Activated CD8-positive, alpha-beta T cell treated with anti-CD3 and anti-CD28 coated beads for 36 hours (primary cell): ENCODE measurements at regions of chr5 and their contacts with region 1.

Region 1: DNA sequence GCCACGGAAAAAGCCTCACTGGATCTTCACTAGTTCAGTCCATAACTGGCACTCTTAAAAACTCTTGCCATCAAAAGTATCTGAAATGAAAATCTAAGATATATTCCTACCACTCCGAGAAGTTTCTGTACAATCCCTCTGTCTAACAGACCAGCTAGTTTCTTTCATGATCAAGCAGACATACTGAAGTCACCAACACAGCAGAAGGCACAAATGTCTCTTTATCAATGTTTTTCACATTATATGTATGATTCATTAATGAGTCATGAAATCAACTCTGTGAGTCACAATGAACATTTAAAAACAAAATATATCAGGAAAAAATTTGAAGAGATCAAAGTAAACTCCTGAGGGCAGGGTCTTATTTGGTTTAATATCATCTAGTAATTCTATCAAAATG is 50.8 kb downstream of the F2R start:
- DNase-seq: no peak
- ATAC-seq: no peak
- H3K4me3 Mint-ChIP-seq: no peak overlapping the region
- H3K27ac Mint-ChIP-seq: no peak overlapping the region
- H3K4me1 Mint-ChIP-seq: peaks cover 6% of the 10 kb centered on the region
- H3K27me3 Mint-ChIP-seq: no peaks in the 10 kb centered on the region
- CTCF ChIP-seq: no peak

Region 2: GRCh38 chr5:76715736-76716455 is 50.9 kb before region 1 on chr5 and contains the start of gene F2R:
- CTCF ChIA-PET with region 1: no interaction called
- POLR2A ChIA-PET with region 1: no interaction called
- intact Hi-C with region 1: loop called (anchors 5 kb)
- DNase-seq: peak; percentile 58
- ATAC-seq: peak; percentile 81
- H3K4me3 Mint-ChIP-seq: peak within 1 kb of the TSS; percentile 73
- H3K27ac Mint-ChIP-seq: peak within 1 kb of the TSS; percentile 46
- H3K4me1 Mint-ChIP-seq: peaks cover 32% of the 10 kb centered on the region
- H3K27me3 Mint-ChIP-seq: peaks cover 42% of the 10 kb centered on the region
- CTCF ChIP-seq: peak; percentile 83
- total RNA-seq, gene F2R: 2.5 to 3.5 TPM

Region 3: DNA sequence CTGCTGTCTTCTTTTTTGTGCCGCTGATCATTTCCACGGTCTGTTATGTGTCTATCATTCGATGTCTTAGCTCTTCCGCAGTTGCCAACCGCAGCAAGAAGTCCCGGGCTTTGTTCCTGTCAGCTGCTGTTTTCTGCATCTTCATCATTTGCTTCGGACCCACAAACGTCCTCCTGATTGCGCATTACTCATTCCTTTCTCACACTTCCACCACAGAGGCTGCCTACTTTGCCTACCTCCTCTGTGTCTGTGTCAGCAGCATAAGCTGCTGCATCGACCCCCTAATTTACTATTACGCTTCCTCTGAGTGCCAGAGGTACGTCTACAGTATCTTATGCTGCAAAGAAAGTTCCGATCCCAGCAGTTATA is 33.7 kb before region 1 on chr5:
- CTCF ChIA-PET with region 1: no interaction called
- POLR2A ChIA-PET with region 1: no interaction called
- intact Hi-C with region 1: loop called (anchors 5 kb)
- DNase-seq: peak; percentile 72
- ATAC-seq: peak; percentile 85
- H3K4me3 Mint-ChIP-seq: peak overlapping the region; percentile 44
- H3K27ac Mint-ChIP-seq: peak overlapping the region; percentile 69
- H3K4me1 Mint-ChIP-seq: peaks cover 20% of the 10 kb centered on the region
- H3K27me3 Mint-ChIP-seq: peaks cover 2% of the 10 kb centered on the region
- CTCF ChIP-seq: no peak